ENCODE measurements at regions of chr14 and their contacts with region 1.

Region 1: DNA sequence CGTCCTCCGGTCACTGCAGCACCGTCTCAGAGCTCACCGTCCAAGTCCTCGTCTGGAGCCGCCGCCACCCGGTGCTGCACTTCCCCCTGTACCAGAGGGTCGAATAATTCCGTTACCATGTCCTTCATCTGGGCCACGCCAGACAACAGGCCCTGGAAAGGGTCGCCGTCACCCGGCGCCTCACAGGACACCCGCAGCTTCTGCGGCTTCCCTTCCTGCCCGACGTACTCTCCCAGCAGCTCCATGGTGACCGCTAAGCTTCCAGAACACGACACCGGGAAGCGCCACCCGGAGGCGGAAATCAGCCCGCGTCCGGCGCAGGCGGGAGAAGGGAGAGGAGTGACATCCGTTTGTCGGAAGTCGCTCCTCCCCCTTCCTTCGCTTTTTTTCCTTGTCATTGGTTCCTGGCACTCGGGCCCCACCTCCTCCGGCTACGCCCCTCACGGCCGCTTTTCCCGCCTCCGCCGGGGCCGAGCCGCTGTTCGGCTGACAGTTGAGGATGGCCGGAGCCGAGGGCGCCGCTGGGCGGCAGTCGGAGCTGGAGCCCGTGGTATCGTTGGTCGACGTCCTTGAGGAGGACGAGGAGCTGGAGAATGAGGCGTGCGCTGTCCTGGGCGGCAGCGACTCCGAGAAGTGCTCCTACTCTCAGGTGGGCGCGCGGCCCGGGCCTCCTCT is at the starts of genes GON7 and UBR7:
- DNase-seq: peak; percentile 97
- H3K4me3 ChIP-seq: peak within 1 kb of the TSS; percentile 71 to 91 (median 82)
- H3K27ac ChIP-seq: peak within 1 kb of the TSS; percentile 73
- H3K4me1 ChIP-seq: peaks cover 18% of the 10 kb centered on the region
- H3K27me3 ChIP-seq: no peaks in the 10 kb centered on the region
- CTCF ChIP-seq: peak; percentile 11 to 39
- total RNA-seq, gene GON7: 7.2 to 9.3 TPM
- total RNA-seq, gene UBR7: 15.2 to 20.3 TPM

Region 2: DNA sequence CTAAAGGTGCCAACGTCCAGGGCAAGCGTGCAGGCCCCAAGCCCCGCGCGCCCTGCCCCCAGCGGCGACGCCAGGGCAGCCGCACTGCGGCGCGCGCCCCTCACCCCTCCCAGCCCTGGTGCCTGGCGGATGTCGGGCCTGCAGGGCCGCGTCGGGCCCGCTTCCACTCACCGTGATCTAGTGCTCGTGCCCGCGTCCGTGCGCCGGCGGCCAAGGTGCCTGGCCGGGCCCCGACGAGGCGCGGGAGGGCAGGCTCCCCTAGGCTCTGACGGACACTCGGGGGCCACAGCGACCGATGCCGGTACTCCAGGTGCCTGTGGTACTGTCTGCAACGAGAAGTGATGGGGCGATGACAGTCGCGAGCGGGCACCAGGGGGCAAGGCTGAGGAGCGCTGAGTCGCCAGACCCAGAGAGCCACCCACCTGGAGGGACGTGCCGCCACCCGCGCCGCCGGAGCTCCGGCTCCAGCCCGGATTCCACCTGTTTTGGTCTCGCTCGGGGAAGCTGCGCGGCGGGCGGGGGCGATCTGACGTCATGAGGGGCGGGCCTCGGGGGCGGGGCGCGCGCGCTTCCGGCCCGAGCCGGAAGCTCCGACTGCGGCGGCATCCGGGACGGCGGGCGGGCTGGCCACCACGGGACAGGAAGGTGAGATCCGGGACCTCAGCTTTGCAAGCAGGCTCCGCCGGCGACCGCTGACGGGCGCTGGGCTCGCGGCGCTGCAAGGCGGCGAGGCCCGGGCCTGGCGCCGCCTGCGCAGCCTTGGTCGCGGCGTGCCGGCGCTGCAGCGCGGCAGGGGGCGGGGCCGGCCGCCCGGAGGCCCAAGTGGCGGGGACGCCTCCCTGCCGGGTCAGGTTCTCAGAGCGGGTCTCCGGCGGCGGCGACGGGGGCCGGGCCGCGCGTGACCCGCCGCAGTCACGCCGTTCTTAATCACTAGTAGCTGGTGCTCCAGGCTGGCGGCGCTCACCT is 22.3 kb before region 1 on chr14 and contains the starts of genes LYSET and MOAP1:
- CTCF ChIA-PET with region 1: no interaction called
- dilution Hi-C with region 1: no loop called
- in situ Hi-C with region 1: no loop called
- intact Hi-C with region 1: loop called (anchors 1 kb)
- DNase-seq: peak; percentile 86
- H3K4me3 ChIP-seq: peak within 1 kb of the TSS; percentile 86 to 100 (median 98)
- H3K27ac ChIP-seq: peak within 1 kb of the TSS; percentile 79
- H3K4me1 ChIP-seq: peaks cover 15% of the 10 kb centered on the region
- H3K27me3 ChIP-seq: no peaks in the 10 kb centered on the region
- CTCF ChIP-seq: peak in 1 of 2 donors; percentile 13
- total RNA-seq, gene LYSET: 10.5 to 14.0 TPM
- total RNA-seq, gene MOAP1: 11.2 to 18.5 TPM

Region 3: DNA sequence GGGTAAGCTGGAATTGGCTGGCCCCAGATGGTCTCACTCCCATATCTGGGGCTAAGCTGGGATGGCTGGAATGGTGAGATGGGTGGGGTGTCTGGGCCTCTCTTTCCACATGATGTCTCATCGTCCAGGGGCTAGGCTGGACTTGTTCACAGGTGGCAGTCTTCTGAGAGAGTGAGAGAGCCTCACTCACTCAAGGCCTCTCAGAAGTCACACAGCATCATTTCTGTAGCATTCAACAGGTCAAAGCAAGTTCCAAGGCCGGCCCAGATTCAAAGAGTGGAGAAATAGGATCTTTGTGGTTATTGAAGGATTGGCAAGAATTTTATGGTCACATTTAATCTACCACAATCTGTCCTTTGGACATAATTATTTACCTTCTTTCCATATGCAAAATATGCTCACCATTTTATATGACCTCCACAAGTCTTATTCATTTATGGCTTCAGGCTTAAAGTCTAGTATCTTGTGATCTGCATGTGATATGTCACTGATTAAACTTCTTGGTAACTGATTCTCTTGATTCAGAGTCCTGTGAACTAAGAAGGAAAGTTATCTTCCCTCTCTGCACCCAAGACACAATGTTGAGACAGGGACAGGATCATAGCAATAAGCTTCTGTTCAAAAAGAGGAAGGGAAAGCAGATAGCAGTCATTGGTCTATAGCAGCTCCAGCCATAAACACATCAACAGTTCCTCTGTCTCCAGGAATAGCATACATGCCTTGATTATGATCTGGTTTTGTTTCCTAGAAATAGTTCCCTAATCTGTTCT is 326.7 kb after region 1 on chr14:
- CTCF ChIA-PET with region 1: no interaction called
- dilution Hi-C with region 1: no loop called
- in situ Hi-C with region 1: no loop called
- intact Hi-C with region 1: loop called (anchors 2 kb)
- DNase-seq: peak; percentile 99
- H3K4me3 ChIP-seq: no peak overlapping the region
- H3K27ac ChIP-seq: peak overlapping the region; percentile 61
- H3K4me1 ChIP-seq: peaks cover 38% of the 10 kb centered on the region
- H3K27me3 ChIP-seq: no peaks in the 10 kb centered on the region
- CTCF ChIP-seq: no peak

Region 4: GRCh38 chr14:93619176-93619793 is 412.4 kb after region 1 on chr14:
- CTCF ChIA-PET with region 1: interaction called, 6 read pairs
- dilution Hi-C with region 1: no loop called
- in situ Hi-C with region 1: no loop called
- intact Hi-C with region 1: loop called (anchors 1 kb)
- DNase-seq: peak; percentile 14
- H3K4me3 ChIP-seq: no peak overlapping the region
- H3K27ac ChIP-seq: no peak overlapping the region
- H3K4me1 ChIP-seq: no peaks in the 10 kb centered on the region
- H3K27me3 ChIP-seq: no peaks in the 10 kb centered on the region
- CTCF ChIP-seq: peak; percentile 58 to 71

Measured in mammary epithelial cell (primary cell).